Natural killer cell (primary cell): ENCODE measurements at regions of chr14 and their contacts with region 1.

Region 1: DNA sequence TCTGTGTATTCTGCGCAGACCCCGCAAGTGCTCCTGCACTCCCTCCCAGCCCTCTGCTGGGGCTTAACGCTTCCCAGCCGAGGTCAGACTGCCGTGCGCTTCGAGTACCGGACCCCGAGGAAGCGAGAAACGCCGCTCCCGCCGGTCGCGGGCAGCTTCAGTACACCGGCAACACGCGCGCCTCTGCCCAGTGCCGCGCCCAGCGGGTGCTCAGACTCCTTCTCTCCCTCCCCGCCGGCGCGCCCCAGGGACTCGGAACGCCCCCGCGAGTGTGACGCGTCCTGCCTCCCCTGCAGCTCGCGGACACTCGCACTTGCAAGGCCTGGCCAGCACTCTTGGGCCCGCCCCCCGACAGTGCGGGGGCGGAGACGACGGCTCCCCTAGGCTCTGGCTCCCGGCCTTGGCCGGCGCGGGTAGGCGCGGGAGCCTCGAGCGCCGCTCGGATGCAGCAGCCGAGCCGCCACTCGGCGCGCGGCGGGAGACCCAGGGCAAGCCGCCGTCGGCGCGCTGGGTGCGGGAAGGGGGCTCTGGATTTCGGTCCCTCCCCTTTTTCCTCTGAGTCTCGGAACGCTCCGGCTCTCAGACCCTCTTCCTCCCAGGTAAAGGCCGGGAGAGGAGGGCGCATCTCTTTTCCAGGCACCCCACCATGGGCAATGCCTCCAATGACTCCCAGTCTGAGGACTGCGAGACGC is at the start of gene PTGER2:
- DNase-seq: peak; percentile 79 to 81
- ATAC-seq: peak; percentile 75 to 85 (median 78)
- H3K4me3 ChIP-seq: peak within 1 kb of the TSS; percentile 86
- H3K4me3 Mint-ChIP-seq: peak within 1 kb of the TSS; percentile 98
- H3K27ac ChIP-seq: peak within 1 kb of the TSS; percentile 78
- H3K27ac Mint-ChIP-seq: peak within 1 kb of the TSS; percentile 95 to 99
- H3K4me1 ChIP-seq: peaks cover 44% of the 10 kb centered on the region
- H3K4me1 Mint-ChIP-seq: peaks cover 86 to 95% of the 10 kb centered on the region in 2 donors
- H3K27me3 ChIP-seq: no peaks in the 10 kb centered on the region
- H3K27me3 Mint-ChIP-seq: no peaks in the 10 kb centered on the region
- CTCF ChIP-seq: no peak
- total RNA-seq, gene PTGER2: 55.3 to 67.9 (median 60.6) TPM

Region 2: GRCh38 chr14:52043690-52044089 is 270.4 kb before region 1 on chr14:
- intact Hi-C with region 1: no loop called
- DNase-seq: peak; percentile 45 to 67
- ATAC-seq: peak; percentile 68 to 84 (median 84)
- H3K4me3 ChIP-seq: no peak overlapping the region
- H3K4me3 Mint-ChIP-seq: no peak overlapping the region
- H3K27ac ChIP-seq: no peak overlapping the region
- H3K27ac Mint-ChIP-seq: no peak overlapping the region
- H3K4me1 ChIP-seq: no peaks in the 10 kb centered on the region
- H3K4me1 Mint-ChIP-seq: peaks cover 5 to 17% of the 10 kb centered on the region in 2 donors
- H3K27me3 ChIP-seq: no peaks in the 10 kb centered on the region
- H3K27me3 Mint-ChIP-seq: peaks cover 0 to 6% of the 10 kb centered on the region in 2 donors
- CTCF ChIP-seq: peak; percentile 67

Region 3: GRCh38 chr14:52279405-52279804 is 34.6 kb before region 1 on chr14:
- intact Hi-C with region 1: no loop called
- DNase-seq: no peak
- ATAC-seq: peak in 2 of 3 donors; percentile 30 to 37
- H3K4me3 ChIP-seq: no peak overlapping the region
- H3K4me3 Mint-ChIP-seq: peak overlapping the region; percentile 68
- H3K27ac ChIP-seq: no peak overlapping the region
- H3K27ac Mint-ChIP-seq: peak overlapping the region; percentile 88 to 89
- H3K4me1 ChIP-seq: peaks cover 12% of the 10 kb centered on the region
- H3K4me1 Mint-ChIP-seq: peaks cover 85 to 89% of the 10 kb centered on the region in 2 donors
- H3K27me3 ChIP-seq: no peaks in the 10 kb centered on the region
- H3K27me3 Mint-ChIP-seq: no peaks in the 10 kb centered on the region
- CTCF ChIP-seq: no peak

Region 4: GRCh38 chr14:52325126-52325525 is 11.1 kb after region 1 on chr14:
- intact Hi-C with region 1: loop called (anchors 1 kb)
- DNase-seq: peak; percentile 37 to 63
- ATAC-seq: peak; percentile 83 to 94 (median 92)
- H3K4me3 ChIP-seq: no peak overlapping the region
- H3K4me3 Mint-ChIP-seq: peak overlapping the region; percentile 88
- H3K27ac ChIP-seq: peak overlapping the region; percentile 53
- H3K27ac Mint-ChIP-seq: peak overlapping the region; percentile 83 to 95
- H3K4me1 ChIP-seq: peaks cover 47% of the 10 kb centered on the region
- H3K4me1 Mint-ChIP-seq: peaks cover 87 to 89% of the 10 kb centered on the region in 2 donors
- H3K27me3 ChIP-seq: no peaks in the 10 kb centered on the region
- H3K27me3 Mint-ChIP-seq: no peaks in the 10 kb centered on the region
- CTCF ChIP-seq: no peak